Activated naive CD4-positive, alpha-beta T cell treated with anti-CD3 and anti-CD28 coated beads for 36 hours (primary cell): ENCODE measurements at regions of chr10 and their contacts with region 1.

Region 1: DNA sequence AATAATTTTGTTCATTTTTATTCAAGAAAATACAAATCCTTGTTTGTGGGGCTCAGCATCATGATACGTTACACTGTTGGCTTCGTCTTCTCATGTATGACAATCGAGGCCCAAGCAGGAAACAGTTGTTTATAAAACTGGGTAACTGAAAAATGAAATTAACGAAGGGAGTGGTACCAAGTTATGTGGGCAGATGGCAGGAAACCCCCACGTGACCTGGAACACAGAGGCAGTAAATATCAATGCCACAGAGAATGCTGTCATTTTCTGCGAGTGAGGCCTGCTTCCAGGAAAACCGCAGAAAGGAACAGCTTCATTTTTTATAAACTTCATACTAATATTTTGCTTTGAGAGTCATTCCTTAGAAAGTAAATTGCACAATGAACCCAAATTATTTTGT is 201.0 kb upstream of the ADARB2 start:
- DNase-seq: peak; percentile 74
- H3K4me3 Mint-ChIP-seq: peak overlapping the region; percentile 15
- H3K27ac Mint-ChIP-seq: peak overlapping the region; percentile 94
- H3K4me1 Mint-ChIP-seq: peaks cover 23% of the 10 kb centered on the region
- H3K27me3 Mint-ChIP-seq: no peaks in the 10 kb centered on the region

Region 2: GRCh38 chr10:1872151-1872726 is 66.1 kb before region 1 on chr10:
- CTCF ChIA-PET with region 1: no interaction called
- intact Hi-C with region 1: no loop called
- DNase-seq: no peak
- H3K4me3 Mint-ChIP-seq: no peak overlapping the region
- H3K27ac Mint-ChIP-seq: no peak overlapping the region
- H3K4me1 Mint-ChIP-seq: no peaks in the 10 kb centered on the region
- H3K27me3 Mint-ChIP-seq: no peaks in the 10 kb centered on the region

Region 3: GRCh38 chr10:2049560-2049959 is 111.2 kb after region 1 on chr10:
- CTCF ChIA-PET with region 1: no interaction called
- intact Hi-C with region 1: loop called (anchors 1 kb)
- DNase-seq: no peak
- H3K4me3 Mint-ChIP-seq: no peak overlapping the region
- H3K27ac Mint-ChIP-seq: no peak overlapping the region
- H3K4me1 Mint-ChIP-seq: no peaks in the 10 kb centered on the region
- H3K27me3 Mint-ChIP-seq: no peaks in the 10 kb centered on the region

Region 4: GRCh38 chr10:2251631-2252030 is 313.3 kb after region 1 on chr10:
- CTCF ChIA-PET with region 1: no interaction called
- intact Hi-C with region 1: no loop called
- DNase-seq: no peak
- H3K4me3 Mint-ChIP-seq: no peak overlapping the region
- H3K27ac Mint-ChIP-seq: no peak overlapping the region
- H3K4me1 Mint-ChIP-seq: no peaks in the 10 kb centered on the region
- H3K27me3 Mint-ChIP-seq: peaks cover 5% of the 10 kb centered on the region